ENCODE measurements at regions of chr3 and their contacts with region 1.

Region 1: DNA sequence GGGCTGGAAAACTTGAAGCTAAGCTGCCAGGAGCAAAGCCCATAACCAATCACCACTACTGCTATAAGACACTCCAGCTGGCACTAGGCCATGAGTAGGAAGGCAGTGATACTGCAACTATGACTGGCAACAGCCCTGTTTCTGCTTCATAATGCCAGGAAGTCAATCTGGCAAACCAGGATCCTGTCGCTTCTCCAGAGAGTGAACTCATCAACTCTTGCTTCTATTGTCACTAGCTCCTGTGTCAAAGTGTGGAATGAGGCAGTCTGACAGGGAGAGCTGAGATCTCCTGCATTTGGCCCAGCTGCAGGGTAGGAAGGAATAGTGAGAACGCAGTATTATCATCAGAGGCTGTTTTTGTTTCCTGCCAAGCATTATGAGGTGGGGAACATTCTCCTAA is 105.3 kb downstream of the CTNNB1 start:
- DNase-seq: peak; percentile 3
- H3K4me3 ChIP-seq: no peak overlapping the region
- H3K27ac ChIP-seq: no peak overlapping the region
- H3K4me1 ChIP-seq: no peaks in the 10 kb centered on the region
- H3K27me3 ChIP-seq: no peaks in the 10 kb centered on the region
- CTCF ChIP-seq: no peak

Region 2: GRCh38 chr3:40557575-40558161 is 746.9 kb before region 1 on chr3:
- CTCF ChIA-PET with region 1: no interaction called
- POLR2A ChIA-PET with region 1: interaction called, 10 read pairs
- intact Hi-C with region 1: no loop called
- DNase-seq: no peak
- H3K4me3 ChIP-seq: no peak overlapping the region
- H3K27ac ChIP-seq: no peak overlapping the region
- H3K4me1 ChIP-seq: no peaks in the 10 kb centered on the region
- H3K27me3 ChIP-seq: no peaks in the 10 kb centered on the region
- CTCF ChIP-seq: no peak

Measured in A673 (cell line).